Endothelial cell of umbilical vein (primary cell): ENCODE measurements at regions of chr3 and their contacts with region 1.

Region 1: DNA sequence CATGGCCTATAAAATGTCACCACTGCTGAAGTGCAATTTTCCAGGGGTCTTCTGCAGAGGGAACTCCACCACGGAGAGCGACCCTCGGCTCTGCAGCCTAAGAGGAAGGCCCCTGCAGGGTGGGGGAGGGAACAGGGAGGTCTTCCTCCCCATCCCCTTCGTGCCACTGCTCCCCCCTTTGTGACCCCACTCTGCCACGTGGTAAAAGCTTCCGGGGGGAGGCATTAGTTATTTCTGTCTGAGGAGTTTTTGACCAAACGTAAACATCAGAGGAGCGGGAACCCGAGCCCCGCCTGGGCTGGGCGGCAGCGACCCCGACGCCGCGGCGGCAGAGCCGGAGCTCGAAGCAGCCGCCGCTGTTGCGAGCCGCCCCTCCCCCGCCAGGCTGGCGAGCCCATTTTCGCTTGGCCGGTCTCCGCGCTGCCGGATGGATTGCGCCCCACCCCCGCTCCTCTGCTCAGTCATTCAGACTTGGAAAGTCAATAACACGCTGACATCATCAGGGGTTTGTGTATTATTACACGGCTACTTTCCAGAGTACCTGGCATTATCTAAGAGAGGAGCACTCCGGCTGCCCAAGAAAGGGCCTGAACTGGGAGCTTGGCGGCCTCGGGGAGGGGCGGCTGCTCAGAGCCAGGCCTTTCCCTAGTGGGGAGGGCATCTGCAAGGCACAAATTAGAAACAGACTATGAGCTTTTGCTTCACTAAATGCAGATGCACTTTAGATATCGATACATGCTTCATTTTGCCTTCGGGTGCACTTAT is 162.5 kb upstream of the TBL1XR1 start:
- DNase-seq: peak; percentile 98
- H3K4me3 ChIP-seq: peak overlapping the region in 2 of 3 experiments; percentile 16 to 43
- H3K27ac ChIP-seq: peak overlapping the region; percentile 98
- H3K4me1 ChIP-seq: peaks cover 50% of the 10 kb centered on the region
- H3K27me3 ChIP-seq: no peaks in the 10 kb centered on the region
- CTCF ChIP-seq: no peak
- POLR2A ChIP-seq: no peak

Region 2: GRCh38 chr3:177197041-177197727 is 162.6 kb before region 1 on chr3 and contains the start of gene TBL1XR1:
- CTCF ChIA-PET with region 1: interaction called, 76 read pairs
- POLR2A ChIA-PET with region 1: interaction called, 10 read pairs
- dilution Hi-C with region 1: no loop called
- intact Hi-C with region 1: loop called (anchors 1 kb)
- DNase-seq: peak; percentile 91
- H3K4me3 ChIP-seq: peak within 1 kb of the TSS; percentile 84 to 97 (median 95)
- H3K27ac ChIP-seq: peak within 1 kb of the TSS; percentile 93
- H3K4me1 ChIP-seq: peaks cover 32% of the 10 kb centered on the region
- H3K27me3 ChIP-seq: no peaks in the 10 kb centered on the region
- CTCF ChIP-seq: no peak
- POLR2A ChIP-seq: no peak
- total RNA-seq, gene TBL1XR1: 146 and 152 TPM in 2 replicates

Region 3: GRCh38 chr3:177410730-177411129 is 51.0 kb after region 1 on chr3:
- CTCF ChIA-PET with region 1: no interaction called
- POLR2A ChIA-PET with region 1: no interaction called
- dilution Hi-C with region 1: no loop called
- intact Hi-C with region 1: loop called (anchors 5 kb)
- DNase-seq: peak; percentile 62
- H3K4me3 ChIP-seq: no peak overlapping the region
- H3K27ac ChIP-seq: no peak overlapping the region
- H3K4me1 ChIP-seq: peaks cover 5% of the 10 kb centered on the region
- H3K27me3 ChIP-seq: peaks cover 0 to 3% of the 10 kb centered on the region in 2 experiments
- CTCF ChIP-seq: no peak
- POLR2A ChIP-seq: no peak

Region 4: GRCh38 chr3:177777699-177778098 is 417.9 kb after region 1 on chr3:
- CTCF ChIA-PET with region 1: interaction called, 12 read pairs
- POLR2A ChIA-PET with region 1: no interaction called
- dilution Hi-C with region 1: no loop called
- intact Hi-C with region 1: loop called (anchors 1 kb)
- DNase-seq: peak; percentile 41
- H3K4me3 ChIP-seq: no peak overlapping the region
- H3K27ac ChIP-seq: no peak overlapping the region
- H3K4me1 ChIP-seq: peaks cover 13% of the 10 kb centered on the region
- H3K27me3 ChIP-seq: no peaks in the 10 kb centered on the region
- CTCF ChIP-seq: peak; percentile 52 to 57
- POLR2A ChIP-seq: no peak

Region 5: GRCh38 chr3:178155521-178155920 is 795.7 kb after region 1 on chr3:
- CTCF ChIA-PET with region 1: no interaction called
- POLR2A ChIA-PET with region 1: no interaction called
- dilution Hi-C with region 1: no loop called
- intact Hi-C with region 1: loop called (anchors 1 kb)
- DNase-seq: no peak
- H3K4me3 ChIP-seq: no peak overlapping the region
- H3K27ac ChIP-seq: no peak overlapping the region
- H3K4me1 ChIP-seq: peaks cover 20% of the 10 kb centered on the region
- H3K27me3 ChIP-seq: no peaks in the 10 kb centered on the region
- CTCF ChIP-seq: no peak
- POLR2A ChIP-seq: no peak

Region 6: GRCh38 chr3:178352326-178353005 is 992.7 kb after region 1 on chr3:
- CTCF ChIA-PET with region 1: no interaction called
- POLR2A ChIA-PET with region 1: no interaction called
- dilution Hi-C with region 1: no loop called
- intact Hi-C with region 1: loop called (anchors 1 kb)
- DNase-seq: peak; percentile 90
- H3K4me3 ChIP-seq: no peak overlapping the region
- H3K27ac ChIP-seq: peak overlapping the region; percentile 89
- H3K4me1 ChIP-seq: peaks cover 21% of the 10 kb centered on the region
- H3K27me3 ChIP-seq: no peaks in the 10 kb centered on the region
- CTCF ChIP-seq: no peak
- POLR2A ChIP-seq: no peak